Common myeloid progenitor, CD34-positive (primary cell): ENCODE measurements at regions of chr6 and their contacts with region 1.

Region 1: GRCh38 chr6:142946181-142946923 is 1.4 kb upstream of the HIVEP2 start:
- DNase-seq: peak; percentile 93 to 97 (median 97)
- H3K4me3 ChIP-seq: peak overlapping the region; percentile 91 to 97 (median 92)
- H3K27ac ChIP-seq: peak overlapping the region; percentile 91 to 95
- H3K4me1 ChIP-seq: peaks cover 8 to 43% (median 29%) of the 10 kb centered on the region in 4 experiments
- H3K27me3 ChIP-seq: no peaks in the 10 kb centered on the region

Region 2: DNA sequence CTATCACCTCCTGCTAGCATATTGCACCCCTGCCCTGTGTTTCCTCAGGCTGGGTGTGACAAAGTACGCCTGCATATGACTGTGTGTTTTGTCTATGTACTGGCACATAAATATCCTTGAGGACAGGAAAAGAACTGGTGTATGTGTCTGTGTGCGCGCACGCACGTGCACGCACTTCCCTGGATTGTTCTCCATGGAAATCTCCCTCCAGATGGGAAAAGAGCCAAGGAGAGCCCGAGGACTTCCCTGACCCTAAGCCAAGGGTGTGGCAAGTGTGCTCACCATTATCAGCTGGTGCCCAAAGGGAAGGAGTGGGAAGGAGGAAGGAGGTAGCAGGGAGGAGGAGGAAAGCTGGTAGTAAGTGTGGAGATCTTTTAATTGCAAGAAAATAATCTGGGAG is 119.0 kb before region 1 on chr6:
- CTCF ChIA-PET with region 1: no interaction called
- POLR2A ChIA-PET with region 1: no interaction called
- DNase-seq: no peak
- H3K4me3 ChIP-seq: no peak overlapping the region
- H3K27ac ChIP-seq: no peak overlapping the region
- H3K4me1 ChIP-seq: peaks cover 0 to 4% (median 2%) of the 10 kb centered on the region in 4 experiments
- H3K27me3 ChIP-seq: no peaks in the 10 kb centered on the region

Region 3: GRCh38 chr6:142885182-142885867 is 61.0 kb before region 1 on chr6:
- CTCF ChIA-PET with region 1: interaction called, 9 read pairs
- POLR2A ChIA-PET with region 1: interaction called, 13 read pairs
- DNase-seq: peak; percentile 87 to 98 (median 96)
- H3K4me3 ChIP-seq: peak overlapping the region in 6 of 7 experiments; percentile 28 to 74 (median 57)
- H3K27ac ChIP-seq: peak overlapping the region; percentile 84 to 89
- H3K4me1 ChIP-seq: peaks cover 13 to 29% (median 27%) of the 10 kb centered on the region in 4 experiments
- H3K27me3 ChIP-seq: no peaks in the 10 kb centered on the region

Region 4: GRCh38 chr6:142926494-142927270 is 19.7 kb before region 1 on chr6:
- CTCF ChIA-PET with region 1: interaction called, 25 read pairs
- POLR2A ChIA-PET with region 1: interaction called, 19 read pairs
- DNase-seq: peak; percentile 57 to 78 (median 71)
- H3K4me3 ChIP-seq: peak overlapping the region; percentile 53 to 92 (median 77)
- H3K27ac ChIP-seq: peak overlapping the region; percentile 53 to 79
- H3K4me1 ChIP-seq: peaks cover 0 to 21% (median 12%) of the 10 kb centered on the region in 4 experiments
- H3K27me3 ChIP-seq: no peaks in the 10 kb centered on the region

Region 5: DNA sequence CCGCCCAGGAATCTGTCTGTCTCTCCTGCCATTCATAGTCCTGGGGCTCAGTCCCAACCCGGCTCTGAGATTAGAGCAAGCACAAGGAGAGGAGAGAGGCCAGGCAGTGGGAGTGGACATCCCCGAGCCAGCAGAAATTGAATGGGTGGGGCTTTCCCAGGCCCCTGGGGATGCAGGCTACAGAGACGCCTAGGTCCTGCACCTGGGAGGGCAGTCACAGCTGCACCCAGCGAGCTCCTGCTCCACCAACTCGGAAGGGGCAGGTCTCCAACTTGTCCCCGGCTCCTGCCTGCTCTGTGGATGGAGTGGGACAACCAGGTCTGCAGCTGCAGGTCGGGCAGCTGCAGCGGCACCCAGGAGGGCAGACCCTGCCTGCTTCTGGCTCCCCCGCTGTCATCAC is 103.3 kb after region 1 on chr6:
- CTCF ChIA-PET with region 1: no interaction called
- POLR2A ChIA-PET with region 1: no interaction called
- DNase-seq: no peak
- H3K4me3 ChIP-seq: no peak overlapping the region
- H3K27ac ChIP-seq: no peak overlapping the region
- H3K4me1 ChIP-seq: peaks cover 0 to 7% (median 3%) of the 10 kb centered on the region in 4 experiments
- H3K27me3 ChIP-seq: no peaks in the 10 kb centered on the region

Region 6: GRCh38 chr6:143060354-143060805 is 114.0 kb after region 1 on chr6:
- CTCF ChIA-PET with region 1: no interaction called
- POLR2A ChIA-PET with region 1: interaction called, 11 read pairs
- DNase-seq: peak; percentile 87 to 97 (median 96)
- H3K4me3 ChIP-seq: peak overlapping the region; percentile 67 to 87 (median 80)
- H3K27ac ChIP-seq: peak overlapping the region; percentile 42 to 82
- H3K4me1 ChIP-seq: peaks cover 3 to 18% (median 13%) of the 10 kb centered on the region in 4 experiments
- H3K27me3 ChIP-seq: no peaks in the 10 kb centered on the region